GM12878 (cell line): ENCODE measurements at regions of chr15 and their contacts with region 1.

Region 1: GRCh38 chr15:64232400-64232799 is 69.6 kb upstream of the PPIB start:
- DNase-seq: no peak
- ATAC-seq: peak; percentile 31; the same call in 1 of the 3 replicates
- H3K4me3 ChIP-seq: no peak overlapping the region
- H3K27ac ChIP-seq: no peak overlapping the region
- H3K4me1 ChIP-seq: no peaks in the 10 kb centered on the region
- H3K27me3 ChIP-seq: no peaks in the 10 kb centered on the region
- CTCF ChIP-seq: no peak
- EP300 ChIP-seq: no peak
- POLR2A ChIP-seq: no peak
- RAD21 ChIP-seq: no peak

Region 2: GRCh38 chr15:64089543-64090280 is 142.7 kb before region 1 on chr15:
- CTCF ChIA-PET with region 1: no interaction called
- POLR2A ChIA-PET with region 1: no interaction called
- RAD21 ChIA-PET with region 1: no interaction called
- SMC1A ChIA-PET with region 1: no interaction called
- in situ Hi-C with region 1: no loop called
- intact Hi-C with region 1: no loop called
- DNase-seq: peak; percentile 68
- ATAC-seq: peak; percentile 47
- H3K4me3 ChIP-seq: peak overlapping the region; percentile 57
- H3K27ac ChIP-seq: peak overlapping the region; percentile 83
- H3K4me1 ChIP-seq: peaks cover 22% of the 10 kb centered on the region
- H3K27me3 ChIP-seq: no peaks in the 10 kb centered on the region
- CTCF ChIP-seq: no peak
- EP300 ChIP-seq: no peak
- POLR2A ChIP-seq: no peak
- RAD21 ChIP-seq: no peak

Region 3: DNA sequence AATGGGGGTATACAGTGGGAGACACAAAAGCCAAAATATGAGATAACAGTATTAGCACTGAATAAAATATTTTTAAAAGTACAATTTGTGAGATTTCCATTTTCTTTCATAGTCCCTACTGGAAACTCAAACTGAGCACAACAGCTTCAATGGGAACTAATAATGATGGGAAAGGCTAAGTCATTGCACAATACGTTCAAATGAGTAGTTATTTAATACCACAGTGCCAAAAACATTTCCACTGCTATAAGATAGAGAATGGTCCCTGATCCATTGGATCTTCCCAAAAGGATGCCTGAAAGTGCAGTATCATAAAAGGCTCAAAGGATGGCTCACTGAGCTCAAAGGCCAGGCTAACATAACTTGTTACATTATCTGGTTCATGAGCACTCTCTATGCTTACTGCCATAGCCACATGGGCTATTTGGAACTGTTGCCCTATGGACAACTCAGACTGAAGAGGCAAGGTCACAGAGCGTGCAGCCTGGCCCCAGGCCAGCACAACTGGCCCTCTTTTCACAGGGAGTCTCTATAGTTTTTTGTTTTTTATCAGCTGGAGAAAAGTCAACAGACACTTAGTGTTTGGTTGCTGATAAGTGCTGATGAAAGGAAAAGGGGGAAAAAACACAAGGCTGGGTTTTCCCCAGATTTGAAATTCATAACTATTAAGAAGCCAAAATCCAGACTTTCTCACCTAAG is 15.5 kb before region 1 on chr15:
- CTCF ChIA-PET with region 1: interaction called, 10 read pairs
- POLR2A ChIA-PET with region 1: no interaction called
- RAD21 ChIA-PET with region 1: no interaction called
- SMC1A ChIA-PET with region 1: interaction called, 3 read pairs
- in situ Hi-C with region 1: no loop called
- intact Hi-C with region 1: no loop called
- DNase-seq: no peak
- ATAC-seq: no peak
- H3K4me3 ChIP-seq: no peak overlapping the region
- H3K27ac ChIP-seq: no peak overlapping the region
- H3K4me1 ChIP-seq: no peaks in the 10 kb centered on the region
- H3K27me3 ChIP-seq: no peaks in the 10 kb centered on the region
- CTCF ChIP-seq: no peak
- EP300 ChIP-seq: no peak
- POLR2A ChIP-seq: no peak
- RAD21 ChIP-seq: no peak

Region 4: GRCh38 chr15:65245096-65245856 is 1012.9 kb after region 1 on chr15:
- CTCF ChIA-PET with region 1: no interaction called
- POLR2A ChIA-PET with region 1: no interaction called
- RAD21 ChIA-PET with region 1: no interaction called
- SMC1A ChIA-PET with region 1: no interaction called
- in situ Hi-C with region 1: no loop called
- intact Hi-C with region 1: no loop called
- DNase-seq: no peak
- ATAC-seq: no peak; the same call in 2 of the 3 replicates
- H3K4me3 ChIP-seq: no peak overlapping the region
- H3K27ac ChIP-seq: no peak overlapping the region
- H3K4me1 ChIP-seq: peaks cover 10% of the 10 kb centered on the region
- H3K27me3 ChIP-seq: no peaks in the 10 kb centered on the region
- CTCF ChIP-seq: no peak
- EP300 ChIP-seq: no peak
- POLR2A ChIP-seq: no peak
- RAD21 ChIP-seq: no peak